ENCODE measurements at regions of chr11 and their contacts with region 1.

Region 1: GRCh38 chr11:18438691-18439090 is 17.0 kb upstream of the LDHAL6A start:
- DNase-seq: no peak
- CTCF ChIP-seq: no peak

Region 2: GRCh38 chr11:18427240-18427639 is 11.5 kb before region 1 on chr11:
- CTCF ChIA-PET with region 1: interaction called, 12 read pairs
- POLR2A ChIA-PET with region 1: no interaction called
- DNase-seq: no peak
- CTCF ChIP-seq: no peak